Sciatic nerve (tissue), 2 donors: ENCODE measurements at regions of chr11 and their contacts with region 1.

Region 1: DNA sequence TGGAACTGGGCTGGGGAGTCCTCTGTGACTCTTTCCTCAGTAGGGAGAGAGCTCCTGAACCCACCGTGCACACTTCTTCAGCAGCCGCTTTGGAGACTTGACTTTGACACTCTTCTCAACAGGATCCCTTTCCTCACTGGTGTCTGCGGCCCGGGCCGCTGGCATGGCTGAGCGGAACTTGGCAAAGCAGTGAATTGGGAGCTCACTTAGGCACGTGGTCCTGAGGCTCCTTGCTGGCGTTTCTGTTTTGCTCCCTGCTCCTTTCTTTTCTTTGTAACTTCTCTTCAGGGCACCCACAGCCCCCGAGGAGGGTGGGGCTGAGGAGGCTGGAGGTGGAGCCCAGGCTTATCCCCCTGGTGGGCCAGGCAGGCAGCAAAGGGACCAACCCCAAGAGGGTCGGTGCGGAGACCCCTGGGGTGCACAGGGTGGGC is 8.4 kb upstream of the KCNQ1OT1 start:
- DNase-seq: peak; percentile 80
- ATAC-seq: peak; percentile 85

Region 2: GRCh38 chr11:1917671-1918516 is 790.3 kb before region 1 on chr11:
- intact Hi-C with region 1: loop called (anchors 5 kb)
- DNase-seq: no peak
- ATAC-seq: peak; percentile 11

Region 3: GRCh38 chr11:2377511-2378443 is 330.4 kb before region 1 on chr11:
- intact Hi-C with region 1: no loop called
- DNase-seq: peak; percentile 85
- ATAC-seq: peak; percentile 76

Region 4: GRCh38 chr11:2612884-2613571 is 95.1 kb before region 1 on chr11:
- intact Hi-C with region 1: no loop called
- DNase-seq: no peak
- ATAC-seq: no peak

Region 5: DNA sequence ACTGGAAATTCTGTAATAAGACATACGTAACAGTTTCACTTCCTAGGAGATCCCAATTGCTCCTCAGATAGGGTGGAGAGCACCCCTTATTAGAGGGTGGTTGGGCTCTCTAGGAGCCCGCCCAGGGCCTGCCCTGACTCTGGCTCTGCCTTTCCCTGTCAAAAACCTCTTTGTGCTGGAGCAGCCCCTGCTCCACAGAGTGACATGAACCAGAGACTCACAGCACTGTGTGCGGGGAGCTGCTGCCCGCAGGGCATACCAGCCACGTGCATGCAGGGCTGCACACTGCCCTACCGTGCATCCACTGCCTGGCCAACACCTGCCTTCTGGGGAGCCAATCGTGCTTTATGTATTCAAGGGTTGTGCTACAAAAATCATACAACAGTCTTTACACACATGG is 32.6 kb before region 1 on chr11:
- intact Hi-C with region 1: no loop called
- DNase-seq: peak; percentile 42
- ATAC-seq: peak; percentile 62

Region 6: GRCh38 chr11:2963112-2963817 is 255.1 kb after region 1 on chr11:
- intact Hi-C with region 1: no loop called
- DNase-seq: no peak
- ATAC-seq: no peak